Dorsolateral prefrontal cortex (tissue), 120 donors: ENCODE measurements at regions of chr6 and their contacts with region 1.

Region 1: DNA sequence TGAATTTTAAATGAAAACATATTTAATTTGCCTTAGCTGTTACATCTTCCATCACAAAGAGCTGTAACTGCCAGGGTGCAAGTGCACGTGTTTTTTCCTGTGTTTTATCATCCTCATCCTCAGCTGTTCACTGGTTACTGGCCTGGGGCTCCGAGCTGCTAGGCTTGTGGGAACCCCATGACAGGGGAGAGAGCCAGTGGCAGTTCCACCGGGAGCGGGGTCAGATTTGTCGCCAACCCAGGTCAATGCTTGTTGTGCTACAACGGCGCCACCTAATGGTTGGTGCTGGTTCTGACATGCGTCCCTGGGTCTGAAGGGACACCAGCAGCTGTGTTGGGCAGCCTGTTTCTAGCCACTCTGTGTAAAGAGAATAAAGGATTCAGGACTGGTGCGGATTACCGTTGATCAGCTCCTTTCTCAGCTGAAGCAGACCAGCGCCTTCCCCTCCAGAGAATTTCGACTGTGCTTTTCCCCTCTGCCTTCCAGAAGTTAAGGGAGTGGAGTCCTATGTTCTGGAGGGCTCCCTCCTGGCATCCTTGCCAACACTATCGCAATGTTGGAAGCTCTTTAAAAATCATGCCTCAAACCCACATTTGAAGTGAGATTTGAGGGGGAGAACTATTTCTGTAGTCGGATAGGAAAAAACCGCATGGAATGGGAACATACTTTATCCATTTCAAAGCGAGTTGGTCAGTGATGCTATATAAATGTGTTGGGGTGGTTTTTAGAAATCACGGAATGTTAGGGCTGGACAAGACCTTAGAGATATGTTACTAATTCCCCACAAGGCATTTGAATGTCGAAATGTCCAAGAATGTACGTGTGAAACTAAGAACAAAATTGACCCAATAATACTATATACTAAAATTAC is 32.1 kb downstream of the SUMO4 start:
- DNase-seq: peak; percentile 79 to 95 (median 91)
- H3K4me3 ChIP-seq: peak overlapping the region in 37 of 59 donors; percentile 2 to 49 (median 23)
- H3K27ac ChIP-seq: peak overlapping the region in 12 of 59 donors; percentile 12 to 54 (median 30)
- H3K27me3 ChIP-seq: no peaks in the 10 kb centered on the region
- CTCF ChIP-seq: peak; percentile 86 to 99 (median 97)

Region 2: DNA sequence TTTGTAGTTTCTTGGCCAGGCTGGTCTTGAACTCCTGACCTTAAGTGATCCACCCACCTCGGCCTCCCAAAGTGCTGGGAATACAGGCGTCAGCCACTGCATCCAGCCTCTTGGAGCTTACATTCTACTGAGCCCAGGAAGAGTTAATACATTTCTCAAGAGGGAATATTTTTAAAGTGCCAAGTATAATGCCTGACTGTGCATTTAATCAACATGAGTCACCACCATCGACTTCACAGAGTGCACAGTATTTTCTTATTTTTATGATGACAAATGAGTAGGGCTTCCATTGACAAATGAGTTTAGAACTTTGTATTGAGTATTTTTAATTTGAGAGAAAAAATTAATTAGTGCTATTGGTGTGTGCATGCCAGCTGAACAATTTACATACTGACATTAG is 1017.3 kb before region 1 on chr6:
- intact Hi-C with region 1: no loop called
- DNase-seq: no peak
- H3K4me3 ChIP-seq: no peak overlapping the region
- H3K27ac ChIP-seq: peak overlapping the region in 2 of 59 donors; percentile 8 to 17
- H3K27me3 ChIP-seq: no peaks in the 10 kb centered on the region
- CTCF ChIP-seq: no peak

Region 3: DNA sequence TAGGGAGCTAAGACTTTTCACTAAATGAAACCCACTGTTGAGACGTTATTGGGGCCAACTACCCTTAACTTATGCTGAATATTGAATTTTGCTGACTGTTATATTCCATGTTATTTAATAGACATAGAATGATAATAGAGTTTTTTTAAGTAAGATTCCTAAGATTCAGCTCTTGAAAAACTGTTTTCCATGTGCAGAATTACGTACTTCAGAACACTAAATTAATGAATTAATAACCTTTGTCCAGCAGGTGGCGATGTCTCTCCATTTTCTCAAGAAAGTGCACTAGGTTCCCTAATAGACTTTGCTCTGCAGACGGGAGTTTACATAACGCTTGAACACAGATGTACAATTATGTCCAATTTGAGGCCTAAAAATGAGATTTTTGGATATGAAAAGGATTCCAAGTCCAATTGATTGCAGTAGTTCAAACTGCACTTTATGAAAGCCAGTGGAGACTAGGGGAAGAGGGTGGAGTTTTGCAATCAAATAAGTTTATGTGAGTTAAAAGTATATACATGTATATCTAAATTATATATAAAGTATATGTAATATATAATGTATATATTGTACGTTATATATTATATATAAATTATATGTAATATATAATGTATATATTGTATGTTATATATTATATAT is 403.3 kb before region 1 on chr6:
- intact Hi-C with region 1: loop called (anchors 2 kb)
- DNase-seq: peak in 3 of 10 donors; percentile 49 to 65 (median 56)
- H3K4me3 ChIP-seq: peak overlapping the region in 7 of 59 donors; percentile 7 to 23 (median 14)
- H3K27ac ChIP-seq: no peak overlapping the region
- H3K27me3 ChIP-seq: no peaks in the 10 kb centered on the region
- CTCF ChIP-seq: peak; percentile 70 to 99 (median 88)

Region 4: GRCh38 chr6:149082286-149082707 is 349.8 kb before region 1 on chr6:
- intact Hi-C with region 1: loop called (anchors 1 to 2 kb)
- DNase-seq: peak; percentile 60 to 94 (median 79)
- H3K4me3 ChIP-seq: no peak overlapping the region
- H3K27ac ChIP-seq: peak overlapping the region in 2 of 59 donors; percentile 31 to 56
- H3K27me3 ChIP-seq: no peaks in the 10 kb centered on the region
- CTCF ChIP-seq: peak; percentile 59 to 97 (median 88)

Region 5: DNA sequence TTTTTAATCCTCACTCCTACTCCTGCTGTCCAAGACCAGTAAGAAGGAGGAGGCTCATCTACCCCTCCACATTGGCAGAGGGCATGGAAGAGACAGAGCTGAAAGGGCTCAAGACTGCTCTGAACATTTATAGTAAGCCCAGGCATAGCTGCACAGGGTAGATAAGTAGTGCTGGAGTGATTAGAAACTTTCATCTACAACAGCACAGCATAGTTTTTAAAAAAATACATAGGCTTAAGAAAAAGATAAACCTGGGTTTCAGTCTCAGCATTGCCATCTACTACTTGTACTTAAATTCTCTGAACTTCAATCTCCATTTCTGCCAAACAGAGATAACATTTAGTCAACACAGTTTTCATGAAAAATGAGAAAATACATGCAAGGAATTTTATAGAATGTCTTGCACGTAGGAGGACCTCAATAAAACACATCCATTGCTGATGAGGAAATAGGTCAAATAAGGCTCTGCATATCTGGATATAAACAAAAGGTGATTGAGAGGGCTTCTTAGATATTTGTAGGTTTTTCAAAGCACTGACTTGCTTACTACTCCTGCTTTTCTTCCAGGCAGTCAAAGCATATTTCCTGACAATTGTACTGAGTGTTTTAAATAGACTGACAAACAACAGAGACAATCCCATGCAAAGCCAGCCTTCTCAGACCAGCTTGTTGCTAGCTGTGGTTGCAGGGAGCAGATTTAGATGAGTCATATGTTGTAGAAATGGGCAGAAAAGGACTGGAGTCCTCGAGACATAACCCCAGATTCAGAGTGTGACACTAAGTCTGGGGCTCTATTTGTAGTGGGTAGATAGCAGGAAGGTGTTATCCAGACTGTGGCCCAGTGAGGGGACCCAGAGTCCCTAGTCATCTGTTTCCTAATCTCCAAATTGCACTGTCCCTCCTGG is 222.0 kb before region 1 on chr6:
- intact Hi-C with region 1: loop called in 1 of 2 experiments (anchors 10 kb)
- DNase-seq: no peak
- H3K4me3 ChIP-seq: no peak overlapping the region
- H3K27ac ChIP-seq: peak overlapping the region in 31 of 59 donors; percentile 0 to 69 (median 24)
- H3K27me3 ChIP-seq: no peaks in the 10 kb centered on the region
- CTCF ChIP-seq: no peak

Region 6: DNA sequence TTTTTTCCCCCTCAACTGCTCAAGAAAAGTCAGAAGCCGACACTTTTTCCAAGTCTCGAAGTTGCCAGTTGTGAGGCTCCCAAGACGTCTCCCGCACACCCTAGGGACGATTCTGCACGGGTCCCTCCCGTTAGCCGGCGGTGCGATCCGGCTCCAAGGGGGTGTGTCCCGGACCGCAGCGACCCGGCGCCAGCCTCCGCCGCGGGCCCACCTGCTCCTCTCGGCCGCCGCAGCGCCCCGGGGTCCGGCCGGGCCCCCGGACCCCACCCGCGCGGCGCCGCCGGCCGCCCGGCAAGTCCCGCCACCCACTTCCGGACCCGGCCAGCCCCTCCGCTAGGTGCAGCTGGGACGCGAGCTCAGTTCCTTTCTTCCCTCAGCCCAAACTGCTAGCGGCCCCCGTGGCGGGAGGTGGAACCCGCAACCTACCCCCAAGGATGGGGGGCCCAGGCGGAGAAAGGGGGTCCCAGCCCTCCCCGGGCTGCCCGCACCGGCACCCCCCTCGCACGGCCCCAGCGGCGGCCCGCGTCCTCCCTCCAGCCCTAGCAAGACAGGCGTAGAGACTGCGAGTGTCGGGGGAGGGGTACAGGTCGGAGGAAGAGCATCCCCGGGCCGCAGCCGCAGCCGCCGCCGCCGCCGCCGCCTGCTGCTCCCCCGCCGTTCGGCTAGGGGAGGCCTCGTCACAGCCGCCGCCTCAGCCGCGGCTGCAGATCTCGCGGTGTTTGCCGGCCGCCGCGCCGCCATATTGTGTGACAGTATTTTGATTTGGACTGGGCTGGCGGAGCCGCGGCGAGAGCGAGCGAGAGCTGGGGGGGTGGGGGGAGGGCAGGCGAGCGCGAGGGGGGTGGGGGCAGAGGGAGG is 115.1 kb before region 1 on chr6:
- intact Hi-C with region 1: loop called in 1 of 2 experiments (anchors 5 kb)
- DNase-seq: peak; percentile 66 to 86 (median 81)
- H3K4me3 ChIP-seq: peak overlapping the region; percentile 52 to 97 (median 87)
- H3K27ac ChIP-seq: peak overlapping the region; percentile 76 to 99 (median 96)
- H3K27me3 ChIP-seq: no peaks in the 10 kb centered on the region
- CTCF ChIP-seq: peak in 7 of 56 donors; percentile 2 to 26 (median 11)

Region 7: DNA sequence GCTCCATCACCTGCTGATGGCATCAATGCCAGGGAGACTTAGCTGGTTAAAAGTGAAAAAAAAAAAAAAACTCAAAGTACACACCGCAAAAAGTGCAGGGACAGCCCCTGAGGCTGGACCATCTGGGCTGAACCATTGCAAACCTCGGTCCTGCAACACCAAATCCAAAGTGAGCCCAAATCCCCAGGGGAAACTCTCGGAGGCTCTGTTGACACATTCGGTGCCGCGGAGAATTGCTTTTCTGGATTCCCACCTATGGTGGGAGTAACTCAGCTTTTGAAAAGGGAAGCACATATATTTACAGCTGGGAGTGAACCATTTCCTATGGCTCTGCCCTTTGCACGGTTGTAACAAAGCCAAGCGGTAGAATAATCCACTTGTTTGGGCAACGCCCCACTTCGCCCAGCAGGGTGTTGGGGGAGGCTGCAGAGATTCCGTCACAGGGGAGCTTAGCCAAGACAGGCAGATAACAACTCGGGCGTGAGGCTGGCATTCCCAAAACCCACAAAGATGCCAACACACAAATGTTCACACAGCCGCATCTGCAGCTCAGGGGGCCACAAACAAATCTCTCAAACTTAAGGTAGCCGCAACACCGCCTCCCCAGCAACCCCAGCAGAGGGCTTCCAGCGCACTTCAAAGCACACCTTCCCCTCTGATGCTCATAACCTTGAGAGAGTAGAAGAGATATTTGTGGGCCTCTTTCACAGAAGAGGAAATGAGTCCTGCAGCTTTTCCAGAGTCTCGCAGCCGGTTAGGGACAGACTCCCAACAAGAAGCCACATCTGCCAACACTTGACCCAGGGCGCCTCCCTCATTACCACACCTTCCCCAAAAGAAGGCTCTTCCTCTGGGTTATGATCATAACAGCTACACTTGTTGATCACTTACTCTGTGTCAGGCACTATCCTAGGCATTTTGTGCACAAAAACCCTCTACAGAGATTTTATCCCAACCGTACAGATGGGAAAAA is 41.2 kb after region 1 on chr6:
- intact Hi-C with region 1: no loop called
- DNase-seq: no peak
- H3K4me3 ChIP-seq: peak overlapping the region in 5 of 59 donors; percentile 3 to 33 (median 16)
- H3K27ac ChIP-seq: no peak overlapping the region
- H3K27me3 ChIP-seq: no peaks in the 10 kb centered on the region
- CTCF ChIP-seq: no peak

Region 8: DNA sequence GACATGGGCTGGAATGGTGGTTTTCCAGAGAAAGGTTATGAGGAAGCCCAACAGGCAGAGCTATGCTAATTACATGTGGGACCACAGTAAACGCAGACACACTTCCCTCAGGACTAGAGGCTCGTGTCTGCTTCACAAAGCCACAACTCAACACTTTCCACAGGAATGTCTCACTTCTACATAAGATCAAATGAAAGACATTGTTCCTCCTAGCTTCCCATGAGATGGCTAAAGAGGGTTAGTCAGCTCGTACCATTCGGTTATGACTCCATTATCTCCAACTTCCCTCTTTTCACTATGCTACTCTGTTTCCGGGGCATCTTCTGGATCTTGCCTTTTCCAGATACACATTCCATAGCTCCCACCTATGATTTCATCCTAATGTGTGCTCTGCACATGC is 81.8 kb after region 1 on chr6:
- intact Hi-C with region 1: loop called in 1 of 2 experiments (anchors 5 kb)
- DNase-seq: no peak
- H3K4me3 ChIP-seq: no peak overlapping the region
- H3K27ac ChIP-seq: no peak overlapping the region
- H3K27me3 ChIP-seq: no peaks in the 10 kb centered on the region
- CTCF ChIP-seq: no peak